AG04450 (cell line): ENCODE measurements at regions of chr2 and their contacts with region 1.

Region 1: GRCh38 chr2:202831242-202832220 is 40.0 kb downstream of the ICA1L start:
- DNase-seq: no peak
- H3K4me3 ChIP-seq: no peak overlapping the region
- H3K27ac ChIP-seq: no peak overlapping the region
- H3K27me3 ChIP-seq: no peaks in the 10 kb centered on the region
- CTCF ChIP-seq: peak; percentile 84

Region 2: GRCh38 chr2:202885190-202885589 is 53.7 kb after region 1 on chr2:
- CTCF ChIA-PET with region 1: interaction called, 3 read pairs
- POLR2A ChIA-PET with region 1: interaction called, 13 read pairs
- DNase-seq: no peak
- H3K4me3 ChIP-seq: no peak overlapping the region
- H3K27ac ChIP-seq: no peak overlapping the region
- H3K27me3 ChIP-seq: no peaks in the 10 kb centered on the region
- CTCF ChIP-seq: no peak